Activated CD4-positive, alpha-beta memory T cell treated with anti-CD3 and anti-CD28 coated beads, Interleukin-2, amount 10 ng/mL, durations not matched to agents 7 days and 5 days (primary cell): ENCODE measurements at regions of chr7 and their contacts with region 1.

Region 1: DNA sequence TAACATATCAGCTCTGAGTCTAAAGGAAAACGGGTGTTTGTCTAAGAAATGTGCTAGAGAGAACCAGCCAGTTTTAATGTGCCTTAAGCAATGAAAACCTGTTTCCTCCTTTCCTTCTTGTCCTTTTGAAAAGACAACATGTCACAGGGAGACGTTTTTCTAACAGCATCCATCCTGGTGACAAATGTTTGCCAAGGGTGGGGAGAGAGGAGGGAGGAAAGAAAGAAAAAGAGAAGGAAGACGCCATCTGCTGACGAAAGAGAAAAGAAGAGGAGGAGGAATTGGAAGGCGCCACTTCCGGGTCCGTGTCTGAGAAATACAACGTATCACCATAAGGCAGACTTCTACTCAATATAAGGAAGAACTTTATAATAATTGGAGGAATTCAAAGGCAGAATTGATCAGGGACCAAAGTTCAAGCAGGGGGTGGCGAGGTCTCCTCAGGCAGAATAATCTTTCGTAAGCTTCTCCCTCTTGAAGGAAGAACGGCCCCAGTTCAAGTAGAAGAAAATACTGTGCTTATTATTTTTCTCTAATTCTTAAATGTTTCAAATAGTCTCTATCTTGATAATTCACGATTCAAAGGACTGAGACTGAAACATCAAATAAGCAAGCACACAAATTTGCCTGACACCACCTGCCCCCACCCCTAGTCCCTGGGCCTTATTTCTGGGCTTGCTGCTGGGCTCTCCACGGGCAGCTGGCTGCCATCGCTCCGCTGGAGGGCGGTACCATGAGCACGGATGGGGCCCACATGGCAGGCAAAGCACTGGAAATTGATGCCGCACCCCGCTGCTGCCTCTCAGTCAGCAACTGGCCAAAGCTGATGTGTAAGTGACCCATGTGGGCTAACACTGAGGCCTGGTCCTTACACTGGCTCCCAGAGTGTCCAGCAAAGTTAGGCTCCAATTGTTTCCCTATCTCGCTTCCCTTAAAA is 273.7 kb upstream of the KLF14 start:
- DNase-seq: peak; percentile 72
- H3K4me3 Mint-ChIP-seq: peak overlapping the region; percentile 41
- H3K27ac Mint-ChIP-seq: peak overlapping the region; percentile 81
- H3K4me1 Mint-ChIP-seq: peaks cover 80% of the 10 kb centered on the region
- H3K27me3 Mint-ChIP-seq: no peaks in the 10 kb centered on the region

Region 2: DNA sequence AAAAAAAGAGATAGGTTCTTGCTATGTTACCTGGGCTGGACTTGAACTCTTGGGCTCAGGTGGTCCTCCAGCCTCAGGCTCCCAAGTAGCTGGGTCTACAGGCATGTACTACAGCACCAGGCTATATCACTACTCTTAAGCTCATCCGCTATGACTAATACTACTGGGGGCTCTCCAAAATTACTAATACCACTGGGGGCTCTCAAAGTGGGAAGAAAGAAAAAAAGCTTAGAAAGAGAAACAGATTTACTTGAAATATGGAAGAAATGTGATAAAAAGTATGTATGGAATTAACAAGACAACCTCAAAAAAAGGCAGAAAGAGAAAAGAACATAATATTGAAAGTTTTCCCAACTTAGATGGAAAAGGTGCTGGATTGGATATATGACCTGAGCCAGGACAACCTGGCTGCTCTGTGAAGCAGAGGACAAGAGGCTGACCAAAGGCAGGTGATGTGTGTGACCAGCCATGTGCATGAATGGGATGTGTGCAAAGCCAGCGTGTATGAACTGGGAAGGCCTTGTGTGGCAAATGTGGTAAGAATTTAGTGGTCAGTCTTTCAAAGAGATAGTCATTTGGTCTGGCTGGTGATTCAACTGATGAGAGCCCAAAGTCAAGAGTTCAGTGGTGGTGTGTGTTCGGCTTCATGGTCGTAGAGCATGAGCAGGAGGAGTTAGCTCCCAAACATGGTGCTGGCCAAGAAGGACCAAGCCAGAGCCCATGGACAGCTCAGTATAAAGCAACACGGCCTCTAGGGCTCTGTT is 41.2 kb before region 1 on chr7:
- CTCF ChIA-PET with region 1: interaction called, 9 read pairs
- POLR2A ChIA-PET with region 1: interaction called, 127 read pairs
- DNase-seq: no peak
- H3K4me3 Mint-ChIP-seq: no peak overlapping the region
- H3K27ac Mint-ChIP-seq: peak overlapping the region; percentile 49
- H3K4me1 Mint-ChIP-seq: peaks cover 73% of the 10 kb centered on the region
- H3K27me3 Mint-ChIP-seq: no peaks in the 10 kb centered on the region

Region 3: GRCh38 chr7:130988443-130988842 is 19.2 kb before region 1 on chr7:
- CTCF ChIA-PET with region 1: interaction called, 19 read pairs
- POLR2A ChIA-PET with region 1: interaction called, 12 read pairs
- DNase-seq: no peak
- H3K4me3 Mint-ChIP-seq: no peak overlapping the region
- H3K27ac Mint-ChIP-seq: peak overlapping the region; percentile 77
- H3K4me1 Mint-ChIP-seq: peaks cover 80% of the 10 kb centered on the region
- H3K27me3 Mint-ChIP-seq: no peaks in the 10 kb centered on the region

Region 4: DNA sequence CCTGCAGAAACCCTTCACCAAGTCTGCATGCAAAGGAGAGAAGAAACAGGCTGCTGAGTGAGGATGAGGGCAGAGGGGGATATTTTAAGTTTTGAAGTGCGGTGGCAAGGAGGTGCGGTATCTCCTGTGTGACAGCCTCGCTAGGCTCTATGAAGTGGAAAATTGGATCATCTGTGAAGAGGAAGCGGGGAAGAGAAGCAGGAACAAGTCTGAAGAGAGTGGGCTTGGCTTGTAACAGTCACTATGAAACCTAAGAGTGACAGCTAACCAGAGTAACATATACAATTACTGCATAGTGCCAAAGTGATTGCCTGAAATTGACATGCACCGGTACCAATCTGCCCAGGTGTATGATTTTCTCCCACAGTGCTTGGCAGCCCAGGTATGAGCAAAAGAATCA is 13.8 kb after region 1 on chr7:
- CTCF ChIA-PET with region 1: interaction called, 12 read pairs
- POLR2A ChIA-PET with region 1: interaction called, 31 read pairs
- DNase-seq: no peak
- H3K4me3 Mint-ChIP-seq: peak overlapping the region; percentile 57
- H3K27ac Mint-ChIP-seq: peak overlapping the region; percentile 82
- H3K4me1 Mint-ChIP-seq: peaks cover 78% of the 10 kb centered on the region
- H3K27me3 Mint-ChIP-seq: no peaks in the 10 kb centered on the region

Region 5: DNA sequence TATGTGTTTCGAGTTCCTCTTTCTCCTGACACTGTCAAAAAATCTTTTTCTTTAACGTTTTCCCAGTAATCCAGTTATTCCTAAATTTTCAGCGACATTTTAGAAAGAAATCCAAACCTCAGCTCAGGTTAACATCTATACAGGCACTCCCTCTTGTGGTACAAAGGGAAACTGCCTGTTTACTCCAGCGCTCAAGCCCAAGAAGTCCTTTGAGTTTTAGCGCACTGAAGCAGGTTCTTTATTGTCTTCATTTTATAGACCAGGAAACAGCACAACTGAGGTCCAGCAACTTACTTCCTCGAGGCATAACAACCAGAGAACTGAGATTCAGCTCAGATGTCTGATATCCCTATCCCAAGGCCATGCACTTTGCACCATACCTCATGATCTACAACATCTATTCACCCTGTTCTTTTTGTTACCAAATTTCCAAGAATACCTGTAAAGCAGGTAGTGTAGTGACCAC is 32.8 kb after region 1 on chr7:
- CTCF ChIA-PET with region 1: interaction called, 5 read pairs
- POLR2A ChIA-PET with region 1: interaction called, 10 read pairs
- DNase-seq: peak; percentile 52
- H3K4me3 Mint-ChIP-seq: no peak overlapping the region
- H3K27ac Mint-ChIP-seq: no peak overlapping the region
- H3K4me1 Mint-ChIP-seq: peaks cover 47% of the 10 kb centered on the region
- H3K27me3 Mint-ChIP-seq: no peaks in the 10 kb centered on the region